Endothelial cell of umbilical vein (primary cell): ENCODE measurements at regions of chr17 and their contacts with region 1.

Region 1: DNA sequence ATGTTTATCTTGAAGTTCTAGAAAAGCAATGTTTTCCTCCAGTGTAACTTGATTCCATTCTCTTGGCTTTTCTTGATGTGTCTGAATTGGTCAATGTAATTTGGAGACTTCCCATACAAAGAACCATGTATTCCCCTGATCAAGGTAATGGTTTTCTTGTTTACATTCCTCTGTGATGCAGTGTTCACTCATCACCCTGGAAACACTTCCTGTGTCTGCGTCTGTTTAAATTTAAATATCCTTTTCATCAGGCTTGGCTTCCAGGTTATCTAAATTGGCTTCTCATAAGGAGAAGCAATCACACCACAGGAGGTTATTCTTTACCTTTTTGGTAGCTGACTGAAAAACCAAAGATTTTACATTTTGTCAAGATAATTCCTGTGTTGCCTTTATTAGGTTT is 237.3 kb upstream of the WSCD1 start:
- DNase-seq: peak; percentile 87
- H3K4me3 ChIP-seq: no peak overlapping the region
- H3K27ac ChIP-seq: peak overlapping the region; percentile 95
- H3K4me1 ChIP-seq: peaks cover 49% of the 10 kb centered on the region
- H3K27me3 ChIP-seq: no peaks in the 10 kb centered on the region
- CTCF ChIP-seq: no peak
- POLR2A ChIP-seq: no peak

Region 2: DNA sequence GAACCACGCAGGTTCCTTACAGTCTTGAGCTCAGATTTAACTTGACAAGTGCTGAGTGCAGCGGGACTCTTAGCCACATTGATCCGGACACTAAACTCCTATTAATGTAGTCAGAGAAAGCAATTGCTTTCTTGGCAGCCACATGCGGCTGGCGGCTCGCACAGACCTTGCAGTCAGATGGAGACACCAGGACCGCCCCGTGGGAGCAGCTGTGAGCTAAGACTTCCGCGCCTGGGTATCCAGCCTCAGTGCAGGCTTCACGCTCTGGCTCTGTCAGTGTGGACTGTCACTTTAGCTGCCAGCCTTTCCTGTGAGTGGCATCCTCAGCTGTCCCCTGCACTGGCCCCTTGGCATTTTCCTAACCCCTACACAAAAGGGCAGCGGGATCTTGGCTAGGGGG is 167.7 kb before region 1 on chr17:
- CTCF ChIA-PET with region 1: no interaction called
- POLR2A ChIA-PET with region 1: no interaction called
- dilution Hi-C with region 1: no loop called
- intact Hi-C with region 1: no loop called
- DNase-seq: no peak
- H3K4me3 ChIP-seq: no peak overlapping the region
- H3K27ac ChIP-seq: no peak overlapping the region
- H3K4me1 ChIP-seq: peaks cover 3% of the 10 kb centered on the region
- H3K27me3 ChIP-seq: peaks cover 1 to 2% of the 10 kb centered on the region in 2 experiments
- CTCF ChIP-seq: no peak
- POLR2A ChIP-seq: no peak

Region 3: DNA sequence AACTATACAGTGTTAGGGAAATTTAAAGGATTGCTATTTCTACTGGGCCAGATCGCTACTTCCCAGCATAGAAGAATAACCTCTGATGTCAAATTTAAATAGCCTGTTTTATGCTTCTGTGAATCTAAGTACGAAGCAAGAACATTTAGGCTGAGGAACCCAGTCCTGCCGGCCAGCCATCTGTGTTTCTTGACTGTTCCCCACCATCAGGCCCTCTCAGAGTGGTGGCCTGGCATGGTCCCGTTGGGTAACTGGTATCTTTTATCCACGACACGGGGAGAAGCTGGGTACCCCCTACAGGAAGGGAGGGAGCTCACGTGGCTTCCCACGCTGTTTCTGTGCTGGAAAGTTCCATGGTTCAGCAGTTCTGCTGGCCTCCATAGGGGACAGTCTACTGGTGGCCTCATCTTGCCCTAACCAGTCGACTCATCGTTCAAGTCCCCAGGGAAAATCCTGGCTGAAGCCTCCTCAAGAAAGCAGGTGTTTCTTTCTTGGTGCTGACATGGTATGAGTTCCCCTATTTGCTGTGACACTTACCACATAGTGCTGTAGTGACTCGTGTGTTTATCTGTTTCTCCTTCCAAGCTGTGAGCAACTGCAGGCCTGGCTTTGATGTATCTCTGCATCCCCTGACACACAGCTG is 46.9 kb before region 1 on chr17:
- CTCF ChIA-PET with region 1: interaction called, 3 read pairs
- POLR2A ChIA-PET with region 1: no interaction called
- dilution Hi-C with region 1: no loop called
- intact Hi-C with region 1: loop called (anchors 1 kb)
- DNase-seq: peak; percentile 48
- H3K4me3 ChIP-seq: no peak overlapping the region
- H3K27ac ChIP-seq: peak overlapping the region; percentile 62
- H3K4me1 ChIP-seq: peaks cover 17% of the 10 kb centered on the region
- H3K27me3 ChIP-seq: no peaks in the 10 kb centered on the region
- CTCF ChIP-seq: peak in 1 of 2 donors; percentile 6
- POLR2A ChIP-seq: no peak

Region 4: DNA sequence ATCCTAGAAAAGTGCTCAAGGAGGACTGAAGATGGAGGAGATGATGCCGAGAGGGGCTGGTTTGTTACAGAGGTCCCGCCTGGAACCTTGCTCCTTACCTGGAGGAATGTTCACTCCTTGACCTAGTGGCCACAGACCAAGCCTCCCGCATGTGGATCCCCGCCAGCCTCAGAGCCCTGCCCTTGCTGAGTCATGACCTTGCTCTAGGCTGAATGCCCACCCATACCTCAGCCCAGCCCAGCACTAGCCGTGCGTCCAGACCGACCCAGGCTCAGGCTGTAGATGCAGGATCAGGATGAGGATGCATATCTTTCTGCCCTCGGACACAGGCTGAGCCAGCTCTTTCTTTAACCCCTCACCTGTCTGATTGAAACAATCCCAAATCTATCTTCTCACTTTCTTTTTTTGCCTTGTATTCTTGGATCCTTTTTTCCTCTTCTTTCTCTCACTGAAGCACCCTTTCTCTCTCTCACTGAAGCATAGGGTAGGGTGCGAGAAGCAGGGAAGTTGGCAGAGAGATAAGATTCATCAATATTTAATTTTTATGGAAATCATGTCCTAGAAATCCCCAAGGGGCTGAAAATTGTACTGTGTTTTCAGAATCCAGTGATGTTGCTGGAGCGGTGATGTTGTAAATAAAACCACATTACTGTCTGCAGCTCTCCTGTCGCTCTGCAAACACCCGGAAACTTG is 272.2 kb after region 1 on chr17:
- CTCF ChIA-PET with region 1: no interaction called
- POLR2A ChIA-PET with region 1: no interaction called
- dilution Hi-C with region 1: no loop called
- intact Hi-C with region 1: loop called (anchors 5 kb)
- DNase-seq: no peak
- H3K4me3 ChIP-seq: no peak overlapping the region
- H3K27ac ChIP-seq: no peak overlapping the region
- H3K4me1 ChIP-seq: peaks cover 22% of the 10 kb centered on the region
- H3K27me3 ChIP-seq: no peaks in the 10 kb centered on the region
- CTCF ChIP-seq: no peak
- POLR2A ChIP-seq: no peak

Region 5: DNA sequence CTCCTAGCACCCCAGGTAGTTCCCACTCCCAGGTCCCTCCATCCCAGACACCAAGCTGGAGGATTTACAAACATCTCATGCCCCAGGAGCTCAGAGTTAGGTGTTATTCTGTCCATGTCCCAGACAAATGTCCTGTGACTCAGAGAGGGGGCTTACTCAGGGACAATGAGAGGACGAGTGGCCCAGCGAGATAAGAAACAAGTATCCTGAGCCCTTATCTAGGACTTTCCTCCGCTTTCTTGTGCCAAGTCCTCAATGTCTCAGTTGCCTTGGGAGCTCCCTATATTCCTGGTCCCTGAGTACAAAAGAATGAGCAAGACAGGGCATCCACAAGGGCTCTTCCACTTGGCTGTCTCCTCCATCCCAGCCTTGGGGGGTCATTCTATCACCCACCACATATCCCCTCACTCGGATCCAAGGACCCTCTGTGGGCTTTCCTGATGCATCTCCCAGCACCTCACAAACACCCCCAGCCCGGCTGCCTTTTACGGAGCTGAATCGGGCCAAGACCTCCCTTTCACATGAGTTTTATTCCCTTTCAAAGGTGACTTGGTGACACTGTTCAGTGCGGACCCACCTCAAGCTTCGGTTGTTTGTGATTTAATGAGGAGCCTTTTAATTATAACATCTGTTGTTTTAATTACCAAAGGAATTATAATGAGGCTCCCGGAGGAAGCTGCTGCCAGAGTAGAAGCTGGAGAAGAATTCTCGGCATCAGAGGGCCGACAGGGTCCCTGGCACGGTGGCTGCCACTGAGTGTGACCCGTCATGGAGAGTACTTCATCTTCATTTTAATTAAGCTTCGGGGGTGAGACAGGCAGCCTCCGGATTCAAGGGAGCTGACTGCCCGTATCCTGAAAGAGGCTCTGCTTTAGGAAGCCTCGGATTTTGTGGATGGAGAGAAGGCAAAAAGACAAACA is 358.8 kb after region 1 on chr17:
- CTCF ChIA-PET with region 1: no interaction called
- POLR2A ChIA-PET with region 1: no interaction called
- dilution Hi-C with region 1: no loop called
- intact Hi-C with region 1: loop called (anchors 2 kb)
- DNase-seq: peak; percentile 94
- H3K4me3 ChIP-seq: no peak overlapping the region
- H3K27ac ChIP-seq: peak overlapping the region; percentile 92
- H3K4me1 ChIP-seq: peaks cover 24% of the 10 kb centered on the region
- H3K27me3 ChIP-seq: no peaks in the 10 kb centered on the region
- CTCF ChIP-seq: no peak
- POLR2A ChIP-seq: peak; percentile 37

Region 6: DNA sequence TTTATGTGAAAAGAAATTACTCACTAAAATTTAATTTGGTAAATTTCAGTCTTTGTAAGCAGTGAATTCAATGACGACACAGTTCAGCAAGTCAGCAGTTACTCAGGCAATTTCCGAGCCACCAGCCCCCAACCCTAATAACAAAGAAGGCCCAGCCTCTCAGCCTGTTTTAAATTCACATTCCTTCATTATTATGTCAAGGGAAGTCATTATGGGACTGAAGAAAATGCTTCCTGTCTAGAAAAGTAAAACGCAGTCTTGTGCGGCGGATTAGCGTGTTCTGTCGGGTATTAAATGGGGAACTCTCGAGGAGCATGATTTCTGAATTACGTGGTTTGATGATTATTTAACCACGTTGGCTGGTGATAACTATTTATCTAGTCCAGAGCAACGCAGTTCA is 424.4 kb after region 1 on chr17:
- CTCF ChIA-PET with region 1: no interaction called
- POLR2A ChIA-PET with region 1: no interaction called
- dilution Hi-C with region 1: no loop called
- intact Hi-C with region 1: loop called (anchors 2 kb)
- DNase-seq: peak; percentile 88
- H3K4me3 ChIP-seq: no peak overlapping the region
- H3K27ac ChIP-seq: peak overlapping the region; percentile 100
- H3K4me1 ChIP-seq: peaks cover 33% of the 10 kb centered on the region
- H3K27me3 ChIP-seq: no peaks in the 10 kb centered on the region
- CTCF ChIP-seq: no peak
- POLR2A ChIP-seq: no peak

Region 7: GRCh38 chr17:6640536-6641373 is 807.9 kb after region 1 on chr17 and contains the starts of genes KIAA0753 and TXNDC17:
- CTCF ChIA-PET with region 1: no interaction called
- POLR2A ChIA-PET with region 1: no interaction called
- dilution Hi-C with region 1: no loop called
- intact Hi-C with region 1: loop called (anchors 10 kb)
- DNase-seq: peak; percentile 96
- H3K4me3 ChIP-seq: peak within 1 kb of the TSS; percentile 44 to 86 (median 70)
- H3K27ac ChIP-seq: peak within 1 kb of the TSS; percentile 83
- H3K4me1 ChIP-seq: peaks cover 15% of the 10 kb centered on the region
- H3K27me3 ChIP-seq: no peaks in the 10 kb centered on the region
- CTCF ChIP-seq: no peak
- POLR2A ChIP-seq: peak; percentile 98
- total RNA-seq, gene KIAA0753: 20.1 and 23.9 TPM in 2 replicates
- total RNA-seq, gene TXNDC17: 101 and 103 TPM in 2 replicates